Ascending aorta (tissue), 2 donors: ENCODE measurements at regions of chrX and their contacts with region 1.

Region 1: GRCh38 chrX:40097497-40098263 is at the start of gene BCOR:
- DNase-seq: no peak
- H3K4me3 ChIP-seq: peak within 1 kb of the TSS; percentile 74 to 92
- H3K27ac ChIP-seq: peak within 1 kb of the TSS; percentile 87 to 92
- H3K4me1 ChIP-seq: peaks cover 0 to 11% of the 10 kb centered on the region in 2 donors
- H3K27me3 ChIP-seq: no peaks in the 10 kb centered on the region
- CTCF ChIP-seq: no peak
- total RNA-seq, gene BCOR: 26.7 TPM

Region 2: GRCh38 chrX:39654952-39655351 is 442.7 kb before region 1 on chrX:
- intact Hi-C with region 1: no loop called
- DNase-seq: no peak
- H3K4me3 ChIP-seq: no peak overlapping the region
- H3K27ac ChIP-seq: no peak overlapping the region
- H3K4me1 ChIP-seq: no peaks in the 10 kb centered on the region
- H3K27me3 ChIP-seq: no peaks in the 10 kb centered on the region
- CTCF ChIP-seq: no peak

Region 3: GRCh38 chrX:39730662-39731397 is 366.9 kb before region 1 on chrX:
- intact Hi-C with region 1: loop called (anchors 2 kb)
- DNase-seq: peak; percentile 50 to 90
- H3K4me3 ChIP-seq: no peak overlapping the region
- H3K27ac ChIP-seq: peak overlapping the region; percentile 45 to 69
- H3K4me1 ChIP-seq: peaks cover 5 to 12% of the 10 kb centered on the region in 2 donors
- H3K27me3 ChIP-seq: no peaks in the 10 kb centered on the region
- CTCF ChIP-seq: peak; percentile 27 to 68 (median 56)

Region 4: GRCh38 chrX:40013266-40014195 is 84.1 kb before region 1 on chrX:
- intact Hi-C with region 1: loop called (anchors 5 kb)
- DNase-seq: peak in 1 of 2 donors; percentile 79
- H3K4me3 ChIP-seq: peak overlapping the region; percentile 55 to 67
- H3K27ac ChIP-seq: peak overlapping the region; percentile 92 to 97
- H3K4me1 ChIP-seq: peaks cover 0 to 9% of the 10 kb centered on the region in 2 donors
- H3K27me3 ChIP-seq: peaks cover 10% of the 10 kb centered on the region
- CTCF ChIP-seq: no peak

Region 5: DNA sequence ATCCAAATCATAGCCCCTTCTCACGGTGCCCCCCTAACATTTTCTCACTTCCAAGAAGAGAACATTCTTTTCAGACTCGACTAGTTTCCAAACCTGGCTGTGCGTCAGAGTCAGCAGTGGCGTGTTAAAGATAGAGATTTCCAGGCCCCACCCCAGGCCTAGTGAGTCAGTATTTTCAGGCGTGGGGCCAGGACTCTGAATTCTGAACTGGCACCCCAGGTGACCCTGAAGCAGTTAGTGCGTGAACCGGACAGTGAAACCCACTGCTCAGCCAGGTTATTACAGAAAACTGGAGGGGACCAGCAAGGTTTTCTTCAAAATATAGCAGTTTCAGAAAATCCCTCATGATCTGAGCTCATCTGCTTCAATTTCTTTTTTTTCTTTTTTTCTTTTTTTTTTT is 35.1 kb after region 1 on chrX:
- intact Hi-C with region 1: loop called (anchors 5 kb)
- DNase-seq: peak in 1 of 2 donors; percentile 92
- H3K4me3 ChIP-seq: no peak overlapping the region
- H3K27ac ChIP-seq: peak overlapping the region; percentile 85 to 86
- H3K4me1 ChIP-seq: peaks cover 4 to 6% of the 10 kb centered on the region in 2 donors
- H3K27me3 ChIP-seq: no peaks in the 10 kb centered on the region
- CTCF ChIP-seq: no peak

Region 6: GRCh38 chrX:40175511-40176350 is 78.1 kb after region 1 on chrX:
- intact Hi-C with region 1: loop called (anchors 2 kb)
- DNase-seq: peak in 1 of 2 donors; percentile 86
- H3K4me3 ChIP-seq: peak overlapping the region; percentile 59 to 75
- H3K27ac ChIP-seq: peak overlapping the region; percentile 89 to 93
- H3K4me1 ChIP-seq: peaks cover 3 to 14% of the 10 kb centered on the region in 2 donors
- H3K27me3 ChIP-seq: no peaks in the 10 kb centered on the region
- CTCF ChIP-seq: no peak